ENCODE measurements at regions of chr12 and their contacts with region 1.

Region 1: GRCh38 chr12:80472902-80473500 is 29.0 kb downstream of the PTPRQ start:
- DNase-seq: no peak
- H3K4me3 ChIP-seq: no peak overlapping the region
- H3K27ac ChIP-seq: no peak overlapping the region
- H3K4me1 ChIP-seq: no peaks in the 10 kb centered on the region
- H3K27me3 ChIP-seq: no peaks in the 10 kb centered on the region
- CTCF ChIP-seq: peak in 3 of 4 experiments; percentile 35 to 47 (median 41)
- POLR2A ChIP-seq: no peak

Region 2: GRCh38 chr12:80698847-80699542 is 226.0 kb after region 1 on chr12:
- intact Hi-C with region 1: no loop called
- DNase-seq: no peak
- H3K4me3 ChIP-seq: no peak overlapping the region
- H3K27ac ChIP-seq: no peak overlapping the region
- H3K4me1 ChIP-seq: no peaks in the 10 kb centered on the region
- H3K27me3 ChIP-seq: no peaks in the 10 kb centered on the region
- CTCF ChIP-seq: no peak
- POLR2A ChIP-seq: no peak

Region 3: DNA sequence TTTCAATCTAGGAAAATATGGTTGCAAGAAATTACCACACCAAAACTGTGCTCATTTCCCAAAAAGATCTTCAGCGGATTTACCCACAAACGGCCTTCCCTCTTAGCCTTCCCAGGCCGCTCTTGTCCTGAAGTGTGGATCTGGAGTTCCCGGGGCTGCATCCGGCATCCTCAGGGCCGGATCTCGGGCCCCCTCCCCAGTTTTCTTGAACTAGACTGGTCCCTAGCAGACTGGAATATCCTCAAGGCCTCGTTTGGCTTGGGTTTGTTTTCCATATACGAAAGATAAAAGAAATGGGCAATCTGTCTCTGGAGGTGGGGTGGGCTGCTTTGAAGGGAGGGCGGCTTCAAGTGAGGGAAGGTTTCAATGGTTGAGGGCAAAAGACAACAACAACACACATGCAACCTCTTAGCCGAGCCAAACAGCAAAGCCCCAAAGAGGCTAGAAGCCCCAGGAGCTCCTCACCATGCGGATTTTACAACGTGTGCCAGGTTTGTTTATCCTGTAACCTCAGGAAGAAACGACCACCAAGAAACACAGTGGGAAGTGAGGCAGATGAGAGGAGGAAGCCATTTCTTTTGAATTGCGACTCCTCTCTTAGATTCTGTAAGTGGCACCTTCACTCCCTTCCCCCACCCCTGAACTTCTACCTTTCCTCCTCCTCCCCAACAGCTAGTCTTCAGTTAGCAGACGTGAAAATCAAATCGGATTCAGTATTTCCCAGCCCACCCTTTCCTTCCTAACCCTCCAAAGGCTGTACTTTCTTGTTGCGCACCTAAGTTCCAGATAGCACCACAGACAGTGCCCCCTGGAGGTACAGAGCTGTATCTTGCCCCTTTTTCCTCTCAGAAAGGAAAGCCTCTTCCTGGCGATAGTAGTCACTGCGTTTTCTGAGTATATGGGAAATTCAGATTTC is 237.1 kb after region 1 on chr12:
- intact Hi-C with region 1: no loop called
- DNase-seq: no peak
- H3K4me3 ChIP-seq: no peak overlapping the region
- H3K27ac ChIP-seq: no peak overlapping the region
- H3K4me1 ChIP-seq: no peaks in the 10 kb centered on the region
- H3K27me3 ChIP-seq: no peaks in the 10 kb centered on the region
- CTCF ChIP-seq: no peak
- POLR2A ChIP-seq: no peak

Region 4: DNA sequence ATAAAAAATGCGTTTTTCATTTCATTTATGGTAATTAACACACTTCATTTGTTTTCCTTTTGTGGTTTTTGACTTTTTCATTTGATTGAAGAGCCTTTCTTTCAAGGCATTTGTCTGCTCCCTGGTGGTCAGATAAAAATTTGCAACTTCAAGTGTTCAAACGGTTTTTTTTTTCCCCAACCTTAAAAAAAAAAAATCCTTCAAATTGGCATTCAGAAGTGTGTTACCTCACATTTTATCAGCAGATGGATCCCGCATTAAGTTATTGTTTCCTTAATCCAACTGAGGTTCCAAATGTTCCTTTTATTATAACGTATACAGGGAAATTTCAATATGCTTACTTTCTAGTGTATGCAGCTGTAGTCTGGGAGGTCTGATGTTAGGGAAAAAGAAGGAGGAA is 290.9 kb after region 1 on chr12:
- intact Hi-C with region 1: loop called (anchors 5 kb)
- DNase-seq: no peak
- H3K4me3 ChIP-seq: no peak overlapping the region
- H3K27ac ChIP-seq: no peak overlapping the region
- H3K4me1 ChIP-seq: no peaks in the 10 kb centered on the region
- H3K27me3 ChIP-seq: no peaks in the 10 kb centered on the region
- CTCF ChIP-seq: peak; percentile 15 to 60 (median 54)
- POLR2A ChIP-seq: no peak